Activated CD4-positive, alpha-beta T cell treated with anti-CD3 and anti-CD28 coated beads, Interleukin-2, amount 10 ng/mL, durations not matched to agents 24 days and 14 days (primary cell): ENCODE measurements at regions of chr15 and their contacts with region 1.

Region 1: DNA sequence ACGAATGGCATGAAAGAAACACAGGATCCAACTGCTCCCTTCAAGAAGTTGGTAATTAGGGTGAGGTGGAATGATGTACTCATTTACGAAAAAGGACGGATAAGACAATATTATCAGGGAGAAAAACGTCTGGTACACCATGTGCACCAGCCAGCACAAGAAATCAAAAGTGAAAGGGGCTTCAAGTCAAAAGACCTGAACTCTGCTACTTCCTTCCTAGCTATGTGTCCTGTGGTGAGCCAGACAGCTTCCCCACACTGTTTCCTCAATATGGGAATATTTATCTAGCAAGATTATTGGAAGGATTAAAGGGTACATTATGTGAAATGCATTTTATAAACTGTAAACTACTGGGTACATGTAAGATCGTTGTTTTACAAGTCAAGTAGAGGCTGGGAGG is 33.9 kb downstream of the RAB27A start:
- DNase-seq: peak; percentile 75
- H3K4me3 Mint-ChIP-seq: peak overlapping the region; percentile 76
- H3K27ac Mint-ChIP-seq: peak overlapping the region; percentile 71
- H3K4me1 Mint-ChIP-seq: peaks cover 68% of the 10 kb centered on the region
- H3K27me3 Mint-ChIP-seq: no peaks in the 10 kb centered on the region

Region 2: DNA sequence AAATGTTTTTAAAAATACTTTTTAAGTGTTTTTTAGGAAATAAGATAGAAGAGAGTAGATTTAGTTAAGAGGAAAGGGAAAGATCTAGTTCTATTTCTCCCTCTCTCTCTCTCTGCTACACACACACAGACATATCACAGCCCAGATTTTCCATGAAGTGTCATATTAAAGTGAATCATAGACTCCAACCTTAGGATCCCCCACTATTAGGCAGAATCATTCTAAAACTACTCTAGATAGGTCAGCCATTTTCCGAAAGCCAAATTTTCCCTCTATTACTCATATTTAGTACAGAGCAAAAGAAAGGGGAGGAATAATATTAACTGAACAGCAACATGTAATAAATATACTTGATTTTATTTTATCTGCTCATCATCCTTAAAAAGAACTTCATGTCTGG is 13.8 kb before region 1 on chr15:
- intact Hi-C with region 1: loop called (anchors 2 kb)
- DNase-seq: no peak
- H3K4me3 Mint-ChIP-seq: peak overlapping the region; percentile 4
- H3K27ac Mint-ChIP-seq: peak overlapping the region; percentile 39
- H3K4me1 Mint-ChIP-seq: peaks cover 57% of the 10 kb centered on the region
- H3K27me3 Mint-ChIP-seq: no peaks in the 10 kb centered on the region

Region 3: DNA sequence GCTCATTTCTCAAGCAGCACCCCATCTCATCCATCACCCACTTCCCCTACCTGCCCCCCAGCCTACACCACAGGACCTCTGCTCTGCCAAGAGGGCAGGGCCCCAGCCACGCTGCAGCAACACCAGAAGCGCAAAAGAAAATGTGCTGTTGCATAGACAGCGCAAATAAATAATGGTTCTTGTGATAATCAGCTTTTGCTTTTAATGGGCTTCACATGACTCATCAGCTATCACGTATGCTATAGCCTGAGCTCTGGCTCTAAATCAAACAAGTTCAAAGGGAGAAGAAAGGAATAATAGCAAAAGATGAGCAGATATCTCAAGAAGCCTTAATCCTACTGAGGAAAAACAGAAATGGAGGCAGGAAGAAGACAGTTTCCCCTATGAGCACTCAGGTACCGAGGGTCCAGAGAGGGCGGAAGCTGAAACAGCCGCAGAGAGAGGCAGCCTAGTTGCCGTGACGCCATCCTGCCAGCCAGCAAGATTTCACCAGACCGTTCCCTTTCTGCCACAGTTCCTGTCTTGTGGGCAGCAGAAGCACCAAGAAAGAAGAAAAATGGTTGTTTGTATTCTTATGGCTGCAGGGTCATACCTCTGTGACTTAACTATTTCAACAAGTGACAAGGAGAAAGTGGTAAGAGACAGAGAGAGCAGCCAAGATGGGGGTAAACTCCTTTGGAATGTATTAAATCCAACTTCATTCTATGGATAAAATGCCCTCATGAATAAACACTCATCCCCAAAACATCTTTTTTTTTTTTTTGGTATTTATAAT is 11.9 kb after region 1 on chr15:
- intact Hi-C with region 1: loop called (anchors 1 kb)
- DNase-seq: peak; percentile 89
- H3K4me3 Mint-ChIP-seq: peak overlapping the region; percentile 81
- H3K27ac Mint-ChIP-seq: peak overlapping the region; percentile 97
- H3K4me1 Mint-ChIP-seq: peaks cover 54% of the 10 kb centered on the region
- H3K27me3 Mint-ChIP-seq: no peaks in the 10 kb centered on the region

Region 4: DNA sequence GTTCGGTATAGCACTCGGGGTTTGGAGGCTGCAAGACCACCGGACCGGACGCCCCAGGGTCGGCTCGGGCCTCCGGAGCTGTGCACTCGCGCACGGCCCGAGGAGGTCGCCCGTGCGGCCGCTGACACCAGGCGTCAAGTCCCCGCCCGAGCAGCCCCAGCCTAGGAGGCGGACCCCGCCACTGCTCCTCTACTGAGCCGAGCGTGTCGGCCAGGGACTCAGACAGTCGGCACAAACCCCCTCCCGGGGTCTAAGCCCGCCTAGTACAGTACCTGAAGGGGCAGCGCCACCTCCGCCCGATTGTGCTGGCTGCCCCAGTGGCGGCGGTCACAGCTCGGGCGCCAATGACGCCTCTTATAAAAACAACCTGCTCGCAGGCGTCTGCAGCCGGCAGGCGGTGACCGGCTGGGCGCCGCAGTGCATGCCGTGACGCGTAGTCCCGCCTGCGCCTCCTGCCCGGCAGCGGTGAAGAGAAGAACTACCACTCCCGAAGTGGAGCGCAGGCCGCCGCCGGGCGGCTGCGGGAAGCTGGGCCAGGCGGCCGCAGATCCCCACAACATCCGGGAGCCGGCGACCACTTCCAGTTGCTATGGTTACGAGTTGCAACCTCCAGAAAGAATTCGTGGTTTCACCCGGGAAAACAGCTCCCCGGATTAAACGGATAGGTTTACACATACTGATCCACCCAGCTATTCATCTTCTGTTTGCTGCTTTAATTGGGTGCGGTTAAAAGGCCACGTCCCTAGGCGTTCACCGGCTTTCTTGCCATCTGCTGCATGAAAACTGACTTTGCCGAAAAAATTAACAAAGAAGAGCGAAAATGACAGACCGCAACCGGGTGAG is 152.5 kb after region 1 on chr15 and contains the starts of genes CCPG1 and PIERCE2:
- intact Hi-C with region 1: no loop called
- DNase-seq: peak; percentile 97
- H3K4me3 Mint-ChIP-seq: peak within 1 kb of the TSS; percentile 87
- H3K27ac Mint-ChIP-seq: peak within 1 kb of the TSS; percentile 90
- H3K4me1 Mint-ChIP-seq: peaks cover 27% of the 10 kb centered on the region
- H3K27me3 Mint-ChIP-seq: no peaks in the 10 kb centered on the region
- total RNA-seq, gene CCPG1: 9.0 and 10.2 TPM in 2 replicates
- total RNA-seq, gene PIERCE2: 0.49 TPM in 1 of 2 replicates, not detected in the other